Ascending aorta (tissue), 2 donors: ENCODE measurements at regions of chr16 and their contacts with region 1.

Region 1: GRCh38 chr16:30657866-30658730 is at the start of gene FBRS:
- DNase-seq: peak; percentile 100
- H3K4me3 ChIP-seq: peak within 1 kb of the TSS; percentile 89 to 96
- H3K27ac ChIP-seq: peak within 1 kb of the TSS; percentile 98 to 99
- H3K4me1 ChIP-seq: peaks cover 26 to 34% of the 10 kb centered on the region in 2 donors
- H3K27me3 ChIP-seq: no peaks in the 10 kb centered on the region
- CTCF ChIP-seq: peak; percentile 74 to 80 (median 80)
- total RNA-seq, gene FBRS: 26.8 TPM

Region 2: GRCh38 chr16:30526823-30527635 is 131.1 kb before region 1 on chr16:
- intact Hi-C with region 1: loop called (anchors 1 kb)
- DNase-seq: peak; percentile 90 to 99
- H3K4me3 ChIP-seq: peak overlapping the region; percentile 86 to 92
- H3K27ac ChIP-seq: peak overlapping the region; percentile 93 to 96
- H3K4me1 ChIP-seq: peaks cover 0 to 6% of the 10 kb centered on the region in 2 donors
- H3K27me3 ChIP-seq: no peaks in the 10 kb centered on the region
- CTCF ChIP-seq: peak; percentile 14 to 31 (median 28)

Region 3: DNA sequence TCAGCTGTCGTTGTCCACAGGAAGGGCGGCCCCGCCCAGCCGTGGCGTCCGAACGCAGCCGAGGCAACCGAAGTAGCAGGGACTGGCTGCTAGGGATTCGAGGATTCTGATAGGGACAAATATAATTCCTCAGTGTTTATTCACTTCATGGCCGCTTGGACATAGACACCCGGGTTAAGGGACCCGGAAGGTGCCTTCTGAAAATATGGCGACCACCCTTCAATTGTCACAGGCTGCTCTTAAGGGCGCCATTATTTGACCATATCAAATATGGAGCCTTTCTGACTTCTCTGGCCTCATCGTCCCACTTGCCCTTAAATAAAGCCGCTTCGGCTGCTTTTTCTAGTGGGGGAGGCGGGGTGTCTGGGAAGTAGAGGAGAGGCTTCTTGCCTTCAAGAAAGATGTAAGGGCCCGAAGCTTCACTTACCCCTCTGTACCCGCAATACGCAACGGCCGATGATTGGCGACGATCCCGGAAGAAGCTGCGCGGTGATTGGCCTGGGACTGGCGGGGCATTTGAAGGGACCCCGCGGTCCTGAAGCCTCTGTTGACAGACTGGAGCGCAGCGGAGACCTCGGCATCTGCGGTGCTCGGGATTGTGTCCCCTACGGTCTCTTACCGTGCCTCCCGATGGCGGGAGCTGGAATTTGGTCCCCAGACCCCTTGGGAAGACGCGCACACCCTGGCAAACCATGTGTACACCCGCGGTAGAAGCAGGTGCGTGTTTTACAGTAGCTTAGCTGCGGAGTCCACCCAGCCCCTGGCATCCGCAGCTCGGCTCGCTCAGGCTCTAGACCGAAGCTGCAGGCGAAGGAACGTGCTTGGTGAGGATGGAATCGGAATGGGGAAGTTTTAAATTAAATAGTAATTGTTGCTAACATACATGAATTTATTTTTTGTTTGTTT is 86.2 kb before region 1 on chr16 and contains the start of gene ZNF688:
- intact Hi-C with region 1: loop called (anchors 1 kb)
- DNase-seq: peak; percentile 97 to 99
- H3K4me3 ChIP-seq: peak within 1 kb of the TSS; percentile 83 to 92
- H3K27ac ChIP-seq: peak within 1 kb of the TSS; percentile 96 to 99
- H3K4me1 ChIP-seq: peaks cover 13 to 21% of the 10 kb centered on the region in 2 donors
- H3K27me3 ChIP-seq: no peaks in the 10 kb centered on the region
- CTCF ChIP-seq: peak in 1 of 3 experiments; percentile 17
- total RNA-seq, gene ZNF688: 11.3 TPM

Region 4: GRCh38 chr16:30628627-30629540 is 29.2 kb before region 1 on chr16:
- intact Hi-C with region 1: loop called (anchors 2 kb)
- DNase-seq: peak in 1 of 2 donors; percentile 93
- H3K4me3 ChIP-seq: peak overlapping the region in 1 of 2 donors; percentile 40
- H3K27ac ChIP-seq: no peak overlapping the region
- H3K4me1 ChIP-seq: peaks cover 0 to 3% of the 10 kb centered on the region in 2 donors
- H3K27me3 ChIP-seq: no peaks in the 10 kb centered on the region
- CTCF ChIP-seq: peak; percentile 76 to 89 (median 85)

Region 5: DNA sequence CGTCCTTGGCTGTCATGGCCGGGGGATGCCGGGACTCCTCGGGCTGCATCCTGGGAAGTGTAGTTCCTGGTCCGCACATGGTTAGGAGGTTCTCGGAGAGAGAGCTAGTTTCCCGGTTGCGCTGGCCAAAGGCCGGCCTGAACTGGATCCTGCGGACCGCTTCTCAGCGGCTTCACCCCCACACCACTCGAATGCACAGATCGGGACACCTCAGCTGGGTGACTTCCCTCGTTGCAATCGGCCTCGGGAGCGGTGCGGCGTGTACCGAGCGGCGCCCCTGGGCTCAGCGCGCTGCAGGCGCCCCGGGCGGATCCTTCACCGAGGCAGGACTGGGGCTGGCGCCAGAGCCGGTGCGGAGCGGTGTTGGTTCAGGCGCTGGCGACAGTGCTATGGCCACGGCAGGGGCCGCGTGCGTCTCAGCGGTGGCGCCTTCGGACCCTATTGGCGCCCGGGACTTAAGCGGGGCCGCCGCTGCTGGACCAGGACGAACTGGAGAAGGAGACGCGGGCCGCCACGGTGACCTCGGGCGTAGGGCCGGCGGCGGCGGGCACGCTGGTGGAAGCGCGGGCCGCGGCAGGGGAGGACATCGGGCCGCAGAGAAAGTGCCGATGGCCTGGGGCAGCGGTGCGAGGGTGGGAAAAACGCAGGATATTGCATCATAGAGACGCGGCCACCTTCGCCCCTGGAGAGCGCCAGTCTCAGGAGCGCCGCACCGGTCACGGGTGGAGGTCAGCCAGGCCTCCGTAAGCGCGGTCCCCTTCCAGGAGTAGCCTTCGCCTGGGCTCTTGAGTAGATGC is 117.5 kb after region 1 on chr16:
- intact Hi-C with region 1: no loop called
- DNase-seq: peak; percentile 32 to 90
- H3K4me3 ChIP-seq: peak overlapping the region; percentile 75 to 86
- H3K27ac ChIP-seq: peak overlapping the region; percentile 79 to 86
- H3K4me1 ChIP-seq: peaks cover 2 to 13% of the 10 kb centered on the region in 2 donors
- H3K27me3 ChIP-seq: no peaks in the 10 kb centered on the region
- CTCF ChIP-seq: no peak

Region 6: DNA sequence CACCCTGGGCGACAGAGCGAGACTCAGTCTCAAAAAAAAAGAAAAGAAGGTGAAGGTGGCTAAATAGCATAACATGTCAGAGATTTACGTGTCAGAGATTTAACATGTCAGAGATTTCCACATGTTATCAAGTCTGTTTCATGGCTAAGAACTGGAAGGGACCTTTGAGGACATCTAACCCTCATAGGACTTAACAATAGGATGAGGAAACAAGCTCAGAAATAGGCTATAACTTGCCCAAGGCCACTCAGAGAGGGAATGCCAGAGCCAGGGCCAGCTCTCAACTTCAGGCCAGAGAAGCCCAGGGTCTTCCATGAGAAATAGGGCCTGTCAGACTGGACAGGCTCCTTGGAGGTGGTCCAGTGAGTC is 155.7 kb after region 1 on chr16:
- intact Hi-C with region 1: loop called (anchors 5 kb)
- DNase-seq: no peak
- H3K4me3 ChIP-seq: peak overlapping the region; percentile 58 to 66
- H3K27ac ChIP-seq: peak overlapping the region; percentile 56 to 79
- H3K4me1 ChIP-seq: peaks cover 5 to 8% of the 10 kb centered on the region in 2 donors
- H3K27me3 ChIP-seq: no peaks in the 10 kb centered on the region
- CTCF ChIP-seq: no peak

Region 7: GRCh38 chr16:30867747-30868146 is 209.6 kb after region 1 on chr16:
- intact Hi-C with region 1: no loop called
- DNase-seq: no peak
- H3K4me3 ChIP-seq: no peak overlapping the region
- H3K27ac ChIP-seq: no peak overlapping the region
- H3K4me1 ChIP-seq: no peaks in the 10 kb centered on the region
- H3K27me3 ChIP-seq: no peaks in the 10 kb centered on the region
- CTCF ChIP-seq: no peak

Region 8: GRCh38 chr16:31458844-31459721 is 801.0 kb after region 1 on chr16 and contains the start of gene ARMC5:
- intact Hi-C with region 1: loop called (anchors 5 kb)
- DNase-seq: peak; percentile 86 to 98
- H3K4me3 ChIP-seq: peak within 1 kb of the TSS; percentile 75 to 84
- H3K27ac ChIP-seq: peak within 1 kb of the TSS; percentile 99 to 100
- H3K4me1 ChIP-seq: peaks cover 20 to 47% of the 10 kb centered on the region in 2 donors
- H3K27me3 ChIP-seq: no peaks in the 10 kb centered on the region
- CTCF ChIP-seq: peak; percentile 55 to 67 (median 64)
- total RNA-seq, gene ARMC5: 10.0 TPM